Pancreas (tissue), 10 donors: ENCODE measurements at regions of chr19 and their contacts with region 1.

Region 1: DNA sequence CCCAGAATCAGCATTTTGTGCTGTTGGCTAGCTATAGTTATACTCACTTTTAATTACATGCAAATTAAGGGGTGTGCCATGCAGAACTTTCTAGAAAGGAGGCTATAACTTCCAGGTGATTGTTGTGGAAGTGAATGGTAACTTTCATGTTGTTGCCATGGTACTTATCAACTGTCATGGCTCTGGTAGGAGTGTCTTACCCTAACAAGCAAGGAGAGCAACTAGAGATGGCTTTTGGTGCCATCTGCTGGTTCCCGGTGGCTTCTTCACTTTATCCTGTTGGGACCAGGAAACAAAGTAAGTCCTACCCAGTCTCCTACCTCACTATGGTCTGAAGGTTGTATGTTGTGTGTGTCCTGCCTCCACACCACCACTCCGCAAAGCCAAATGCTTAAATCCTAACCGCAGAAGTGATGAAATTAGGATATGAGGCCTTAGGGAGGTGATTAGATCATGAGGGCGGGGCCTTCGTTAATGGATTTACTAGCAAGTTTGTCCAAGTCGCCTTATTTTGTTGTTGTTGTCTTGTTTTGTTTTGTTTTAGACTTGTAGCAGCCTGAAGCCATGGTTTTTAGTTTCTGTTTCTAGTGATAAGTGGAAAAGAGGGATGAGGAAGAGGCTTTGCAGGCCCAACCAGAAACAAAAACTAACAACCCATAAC is 22.6 kb downstream of the FBXL12 start:
- DNase-seq: peak; percentile 70 to 83 (median 77)
- ATAC-seq: peak; percentile 41 to 69 (median 46)
- H3K4me3 ChIP-seq: no peak overlapping the region
- H3K27ac ChIP-seq: peak overlapping the region in 2 of 4 donors; percentile 44 to 52
- H3K4me1 ChIP-seq: peaks cover 0 to 6% (median 0%) of the 10 kb centered on the region in 3 donors
- H3K27me3 ChIP-seq: no peaks in the 10 kb centered on the region
- CTCF ChIP-seq: peak; percentile 51 to 65 (median 56)

Region 2: GRCh38 chr19:9205501-9206113 is 590.6 kb before region 1 on chr19:
- intact Hi-C with region 1: loop called in 1 of 3 experiments (anchors 10 kb)
- DNase-seq: peak; percentile 45 to 86 (median 71)
- ATAC-seq: peak in 3 of 4 donors; percentile 89 to 96 (median 89)
- H3K4me3 ChIP-seq: peak overlapping the region in 1 of 4 donors; percentile 17
- H3K27ac ChIP-seq: no peak overlapping the region
- H3K4me1 ChIP-seq: no peaks in the 10 kb centered on the region
- H3K27me3 ChIP-seq: peaks cover 0 to 4% (median 0%) of the 10 kb centered on the region in 4 donors
- CTCF ChIP-seq: peak; percentile 54 to 93 (median 84)

Region 3: GRCh38 chr19:9627856-9628255 is 168.4 kb before region 1 on chr19:
- intact Hi-C with region 1: loop called in 1 of 3 experiments (anchors 5 kb)
- DNase-seq: no peak
- ATAC-seq: no peak
- H3K4me3 ChIP-seq: no peak overlapping the region
- H3K27ac ChIP-seq: no peak overlapping the region
- H3K4me1 ChIP-seq: no peaks in the 10 kb centered on the region
- H3K27me3 ChIP-seq: no peaks in the 10 kb centered on the region
- CTCF ChIP-seq: no peak